ENCODE measurements at regions of chr6 and their contacts with region 1.

Region 1: DNA sequence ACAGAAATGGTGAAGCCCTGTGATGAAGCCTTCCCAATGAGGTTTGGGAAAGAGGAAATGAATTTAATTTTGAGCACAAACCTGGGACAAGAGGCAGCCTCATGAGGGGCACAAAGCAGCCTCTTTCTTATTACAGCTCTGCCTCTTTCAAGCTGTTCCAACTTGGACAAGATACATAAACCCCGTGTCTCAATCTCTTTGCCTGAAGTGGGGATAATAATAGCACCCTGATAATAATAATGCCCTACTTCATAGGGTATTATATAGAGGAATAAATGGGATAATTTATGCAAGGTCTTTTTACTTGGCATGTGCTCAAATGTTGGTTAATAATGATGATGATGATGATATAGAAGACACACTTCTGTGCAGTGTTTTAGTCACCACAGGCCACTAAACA is 91.1 kb upstream of the PLN start:
- DNase-seq: no peak
- H3K4me3 ChIP-seq: no peak overlapping the region
- H3K27ac ChIP-seq: no peak overlapping the region
- H3K4me1 ChIP-seq: peaks cover 0 to 9% (median 0%) of the 10 kb centered on the region in 4 donors
- H3K27me3 ChIP-seq: no peaks in the 10 kb centered on the region
- CTCF ChIP-seq: no peak

Region 2: GRCh38 chr6:118501765-118502164 is 44.8 kb after region 1 on chr6:
- intact Hi-C with region 1: loop called (anchors 2 kb)
- DNase-seq: no peak
- H3K4me3 ChIP-seq: no peak overlapping the region
- H3K27ac ChIP-seq: no peak overlapping the region
- H3K4me1 ChIP-seq: peaks cover 0 to 7% (median 0%) of the 10 kb centered on the region in 4 donors
- H3K27me3 ChIP-seq: no peaks in the 10 kb centered on the region
- CTCF ChIP-seq: no peak